Endothelial cell of umbilical vein (primary cell): ENCODE measurements at regions of chr6 and their contacts with region 1.

Region 1: DNA sequence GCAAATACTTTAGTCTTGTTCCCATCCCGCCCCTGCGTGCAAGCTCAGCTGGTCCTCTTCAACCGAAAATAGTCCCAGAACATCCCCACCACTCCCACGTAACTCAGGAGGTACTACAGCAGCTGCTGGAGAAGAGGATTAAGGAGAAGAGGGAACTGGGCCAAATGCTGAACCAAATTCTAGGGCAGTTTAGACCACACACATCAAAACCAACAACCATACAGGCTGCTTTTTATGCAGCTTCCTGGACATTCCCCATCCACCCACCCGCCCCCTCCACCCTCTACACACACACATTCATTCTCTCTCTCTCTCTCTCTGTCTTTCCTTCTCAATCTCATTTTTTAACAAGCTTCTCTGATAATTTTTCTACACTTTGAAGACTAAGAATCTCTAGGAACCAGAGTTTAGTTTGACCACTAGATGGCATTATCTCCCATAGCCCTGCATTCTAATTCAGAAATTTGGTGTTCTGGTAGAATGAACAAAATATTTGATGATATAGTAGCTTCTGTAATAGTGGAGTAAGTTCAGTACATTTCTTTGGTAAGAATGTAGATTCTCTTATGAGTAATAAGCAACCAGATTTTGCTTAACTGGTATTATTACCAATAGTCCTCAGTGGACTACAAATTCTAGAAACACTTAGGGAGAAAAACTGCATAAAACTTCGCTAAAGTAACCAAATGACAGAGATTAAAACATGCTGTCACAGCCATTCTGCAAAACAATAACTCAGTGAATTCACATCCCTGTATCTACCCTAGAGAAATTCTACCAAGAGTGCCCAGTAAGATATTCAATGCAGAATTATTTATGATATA is 52.1 kb upstream of the BEND6 start:
- DNase-seq: peak; percentile 49
- H3K4me3 ChIP-seq: no peak overlapping the region
- H3K27ac ChIP-seq: no peak overlapping the region
- H3K4me1 ChIP-seq: peaks cover 10% of the 10 kb centered on the region
- H3K27me3 ChIP-seq: no peaks in the 10 kb centered on the region
- CTCF ChIP-seq: peak; percentile 50 to 52
- POLR2A ChIP-seq: no peak

Region 2: GRCh38 chr6:56724455-56724854 is 178.4 kb before region 1 on chr6:
- CTCF ChIA-PET with region 1: no interaction called
- POLR2A ChIA-PET with region 1: no interaction called
- dilution Hi-C with region 1: no loop called
- intact Hi-C with region 1: no loop called
- DNase-seq: no peak
- H3K4me3 ChIP-seq: no peak overlapping the region
- H3K27ac ChIP-seq: no peak overlapping the region
- H3K4me1 ChIP-seq: peaks cover 8% of the 10 kb centered on the region
- H3K27me3 ChIP-seq: no peaks in the 10 kb centered on the region
- CTCF ChIP-seq: no peak
- POLR2A ChIP-seq: no peak

Region 3: DNA sequence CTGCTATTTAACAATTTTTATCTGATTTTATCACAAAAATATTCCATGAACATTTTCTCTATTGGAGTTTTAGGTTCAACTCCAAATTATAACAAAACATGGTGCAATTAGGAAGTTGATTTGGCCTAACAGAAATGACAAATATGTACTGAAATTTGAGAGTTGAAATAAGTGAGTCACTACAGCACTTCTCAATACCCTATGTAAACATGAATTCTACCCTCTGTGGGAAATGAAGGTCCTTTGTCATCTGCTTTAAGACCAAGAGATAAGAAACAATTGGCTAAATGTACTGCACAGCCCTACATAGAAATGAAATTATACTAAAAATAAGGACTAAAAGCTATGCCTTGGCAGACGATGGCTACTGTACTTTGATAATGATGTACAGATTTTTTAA is 34.2 kb before region 1 on chr6:
- CTCF ChIA-PET with region 1: interaction called, 36 read pairs
- POLR2A ChIA-PET with region 1: no interaction called
- dilution Hi-C with region 1: no loop called
- intact Hi-C with region 1: loop called (anchors 5 kb)
- DNase-seq: peak; percentile 91
- H3K4me3 ChIP-seq: peak overlapping the region in 1 of 3 experiments; percentile 5
- H3K27ac ChIP-seq: peak overlapping the region; percentile 70
- H3K4me1 ChIP-seq: peaks cover 52% of the 10 kb centered on the region
- H3K27me3 ChIP-seq: no peaks in the 10 kb centered on the region
- CTCF ChIP-seq: no peak
- POLR2A ChIP-seq: no peak

Region 4: GRCh38 chr6:56922645-56923044 is 19.8 kb after region 1 on chr6:
- CTCF ChIA-PET with region 1: interaction called, 11 read pairs
- POLR2A ChIA-PET with region 1: no interaction called
- dilution Hi-C with region 1: no loop called
- intact Hi-C with region 1: no loop called
- DNase-seq: no peak
- H3K4me3 ChIP-seq: no peak overlapping the region
- H3K27ac ChIP-seq: no peak overlapping the region
- H3K4me1 ChIP-seq: no peaks in the 10 kb centered on the region
- H3K27me3 ChIP-seq: no peaks in the 10 kb centered on the region
- CTCF ChIP-seq: no peak
- POLR2A ChIP-seq: no peak

Region 5: GRCh38 chr6:56955171-56956045 is 52.6 kb after region 1 on chr6:
- CTCF ChIA-PET with region 1: interaction called, 58 read pairs
- POLR2A ChIA-PET with region 1: interaction called, 3 read pairs
- dilution Hi-C with region 1: no loop called
- intact Hi-C with region 1: loop called (anchors 1 kb)
- DNase-seq: peak; percentile 83
- H3K4me3 ChIP-seq: peak overlapping the region; percentile 43 to 83 (median 75)
- H3K27ac ChIP-seq: peak overlapping the region; percentile 52
- H3K4me1 ChIP-seq: peaks cover 17% of the 10 kb centered on the region
- H3K27me3 ChIP-seq: no peaks in the 10 kb centered on the region
- CTCF ChIP-seq: peak; percentile 82 to 88
- POLR2A ChIP-seq: no peak

Region 6: GRCh38 chr6:57089687-57090460 is 187.0 kb after region 1 on chr6 and contains the start of gene ZNF451:
- CTCF ChIA-PET with region 1: interaction called, 7 read pairs
- POLR2A ChIA-PET with region 1: no interaction called
- dilution Hi-C with region 1: no loop called
- intact Hi-C with region 1: loop called (anchors 5 kb)
- DNase-seq: peak; percentile 99
- H3K4me3 ChIP-seq: peak within 1 kb of the TSS; percentile 57 to 70 (median 63)
- H3K27ac ChIP-seq: peak within 1 kb of the TSS; percentile 69
- H3K4me1 ChIP-seq: peaks cover 30% of the 10 kb centered on the region
- H3K27me3 ChIP-seq: no peaks in the 10 kb centered on the region
- CTCF ChIP-seq: no peak
- POLR2A ChIP-seq: peak; percentile 49
- total RNA-seq, gene ZNF451: 54.2 and 64.4 TPM in 2 replicates

Region 7: DNA sequence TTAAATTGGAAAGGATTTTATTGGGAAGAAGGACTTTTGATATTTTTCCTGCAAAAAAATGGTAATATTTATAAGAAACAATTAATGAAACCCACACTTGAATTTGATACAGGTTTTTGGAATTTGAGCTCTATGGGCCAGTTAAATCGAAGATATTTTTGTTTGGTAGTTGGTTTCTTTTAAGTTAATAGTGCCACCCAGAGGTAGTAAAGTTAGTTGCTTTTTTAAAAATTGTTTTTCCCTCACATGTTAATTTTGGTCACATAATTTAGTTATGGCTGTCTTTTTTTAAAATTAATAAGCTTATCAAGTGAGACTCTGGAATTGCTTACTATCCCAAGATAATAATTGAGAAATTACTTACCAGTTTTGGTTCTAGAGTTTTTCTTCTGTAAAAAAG is 421.7 kb after region 1 on chr6:
- CTCF ChIA-PET with region 1: interaction called, 68 read pairs
- POLR2A ChIA-PET with region 1: no interaction called
- dilution Hi-C with region 1: no loop called
- intact Hi-C with region 1: no loop called
- DNase-seq: peak; percentile 24
- H3K4me3 ChIP-seq: no peak overlapping the region
- H3K27ac ChIP-seq: no peak overlapping the region
- H3K4me1 ChIP-seq: no peaks in the 10 kb centered on the region
- H3K27me3 ChIP-seq: no peaks in the 10 kb centered on the region
- CTCF ChIP-seq: peak; percentile 6 to 20
- POLR2A ChIP-seq: no peak